ENCODE measurements at regions of chr16 and their contacts with region 1.

Region 1: DNA sequence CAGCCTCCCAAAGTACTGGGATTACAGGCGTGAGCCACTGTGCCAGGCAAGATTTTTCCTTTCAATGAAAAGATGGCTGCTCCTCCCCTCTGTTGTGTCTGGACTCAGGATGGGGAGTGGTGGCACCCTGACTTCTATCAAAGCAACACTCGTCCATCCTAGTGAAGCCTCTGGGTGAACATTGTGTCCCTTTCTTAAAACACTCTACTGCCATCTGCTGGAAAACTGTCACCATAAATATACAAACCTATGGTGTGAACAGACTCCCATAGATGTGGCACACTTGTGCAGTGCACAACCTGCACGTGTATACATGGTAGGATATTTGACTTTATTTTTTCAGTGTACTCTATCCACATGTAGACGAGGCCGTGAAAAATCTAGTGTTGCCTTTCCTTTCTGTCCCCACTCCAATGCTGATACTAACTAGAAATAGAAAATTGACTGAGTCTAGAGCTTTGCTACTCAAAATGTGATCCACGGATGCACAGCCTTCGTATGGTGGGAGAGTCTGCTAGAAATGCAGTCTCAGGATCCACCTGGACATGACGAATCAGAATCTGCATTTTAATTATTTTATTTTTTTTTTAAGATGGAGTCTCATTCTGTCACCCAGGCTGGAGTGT is 55.9 kb upstream of the PLCG2 start:
- DNase-seq: peak; percentile 92
- ATAC-seq: peak; percentile 90
- H3K4me3 ChIP-seq: no peak overlapping the region
- H3K27ac ChIP-seq: no peak overlapping the region
- H3K4me1 ChIP-seq: peaks cover 0 to 14% of the 10 kb centered on the region in 2 experiments; a peak in 2 of 4 replicates
- H3K27me3 ChIP-seq: no peaks in the 10 kb centered on the region
- CTCF ChIP-seq: peak; percentile 75 to 97 (median 91)
- POLR2A ChIP-seq: no peak
- RAD21 ChIP-seq: peak; percentile 100

Region 2: DNA sequence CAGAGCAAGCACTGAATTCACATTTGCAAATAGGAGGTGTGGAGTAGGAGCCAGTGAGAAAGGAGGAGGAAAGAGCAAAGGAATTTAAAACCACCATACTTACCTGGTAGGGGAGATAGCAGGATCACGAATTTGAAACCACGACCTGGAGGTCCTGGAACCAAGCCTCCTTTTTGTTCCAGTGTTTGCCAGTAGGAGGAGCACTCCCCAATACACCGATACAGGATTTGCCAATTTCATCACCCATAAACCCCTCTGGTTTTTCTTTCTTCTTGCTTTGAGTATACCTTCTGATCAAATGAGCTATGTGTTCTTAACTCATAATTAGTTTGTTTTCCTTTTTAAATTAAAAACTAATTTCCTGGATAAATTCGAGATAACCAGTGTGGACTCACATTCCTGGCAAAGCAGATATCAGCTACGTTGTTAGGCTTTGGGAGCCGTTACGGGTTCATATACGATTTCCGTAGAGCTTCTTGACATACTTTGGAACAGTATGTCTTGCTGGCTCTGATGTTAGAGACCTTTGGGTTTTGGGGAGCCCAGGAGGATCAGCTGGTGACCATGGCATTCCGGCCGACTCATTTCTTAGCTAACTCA is 462.1 kb before region 1 on chr16:
- CTCF ChIA-PET with region 1: no interaction called
- POLR2A ChIA-PET with region 1: no interaction called
- RAD21 ChIA-PET with region 1: no interaction called
- intact Hi-C with region 1: loop called (anchors 5 kb)
- DNase-seq: peak; percentile 29
- ATAC-seq: peak; percentile 88
- H3K4me3 ChIP-seq: no peak overlapping the region
- H3K27ac ChIP-seq: no peak overlapping the region
- H3K4me1 ChIP-seq: peaks cover 0 to 5% of the 10 kb centered on the region in 2 experiments; a peak in 1 of 4 replicates
- H3K27me3 ChIP-seq: no peaks in the 10 kb centered on the region
- CTCF ChIP-seq: peak; percentile 51 to 94 (median 93); a peak in 5 of 6 replicates
- POLR2A ChIP-seq: no peak
- RAD21 ChIP-seq: peak; percentile 56

Region 3: DNA sequence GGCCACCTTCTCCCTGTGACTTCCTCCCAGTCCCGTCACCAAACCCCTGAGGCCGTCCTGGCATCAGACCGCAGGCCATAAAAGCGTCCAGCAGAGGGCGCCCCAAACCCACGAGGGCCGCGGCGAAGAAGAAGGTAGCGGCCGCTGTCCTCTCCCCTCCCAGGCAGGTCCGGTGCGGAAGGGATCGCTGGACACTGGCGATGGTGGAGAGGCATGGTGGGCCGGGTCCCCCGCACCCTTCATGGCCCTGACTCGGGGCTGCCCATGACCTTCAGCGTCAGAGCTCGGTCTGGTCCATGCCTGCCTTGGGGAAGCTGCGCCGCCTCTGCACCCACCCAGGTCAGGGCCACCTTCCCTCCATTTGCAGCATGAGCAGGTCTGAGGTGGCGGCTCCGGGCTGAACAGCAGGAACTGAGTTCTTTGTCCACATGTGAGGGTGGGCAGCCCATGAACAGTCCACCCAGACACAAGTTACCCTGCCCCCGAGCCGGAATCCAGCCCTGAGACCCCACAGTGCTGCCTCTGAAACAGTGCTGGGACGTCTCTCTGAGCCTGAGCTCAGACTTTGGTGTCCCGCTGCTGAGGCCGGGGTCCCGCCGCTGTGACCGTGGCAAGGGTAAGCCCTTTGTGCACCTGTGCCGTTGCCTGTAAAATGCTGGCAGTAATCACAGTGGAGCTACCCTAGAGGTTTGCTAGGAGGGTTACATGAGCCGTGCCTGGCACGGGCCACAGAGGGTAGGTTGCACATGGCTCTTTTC is 319.4 kb before region 1 on chr16:
- CTCF ChIA-PET with region 1: interaction called, 4 read pairs
- POLR2A ChIA-PET with region 1: interaction called, 5 read pairs
- RAD21 ChIA-PET with region 1: no interaction called
- intact Hi-C with region 1: loop called (anchors 1 kb)
- DNase-seq: peak; percentile 85
- ATAC-seq: peak; percentile 63
- H3K4me3 ChIP-seq: peak overlapping the region; percentile 15 to 30; a peak in 3 of 4 replicates
- H3K27ac ChIP-seq: peak overlapping the region; percentile 63; the same call in 1 of the 2 replicates
- H3K4me1 ChIP-seq: peaks cover 52 to 82% of the 10 kb centered on the region in 2 experiments
- H3K27me3 ChIP-seq: no peaks in the 10 kb centered on the region
- CTCF ChIP-seq: peak in 2 of 3 experiments; percentile 97 to 100; a peak in 4 of 6 replicates
- POLR2A ChIP-seq: no peak
- RAD21 ChIP-seq: no peak

Region 4: GRCh38 chr16:81585785-81586184 is 137.4 kb before region 1 on chr16:
- CTCF ChIA-PET with region 1: interaction called, 3 read pairs
- POLR2A ChIA-PET with region 1: no interaction called
- RAD21 ChIA-PET with region 1: no interaction called
- intact Hi-C with region 1: loop called (anchors 2 kb)
- DNase-seq: peak; percentile 64
- ATAC-seq: peak; percentile 47
- H3K4me3 ChIP-seq: peak overlapping the region; percentile 13 to 41; a peak in 3 of 4 replicates
- H3K27ac ChIP-seq: peak overlapping the region; percentile 69
- H3K4me1 ChIP-seq: peaks cover 72 to 80% of the 10 kb centered on the region in 2 experiments
- H3K27me3 ChIP-seq: no peaks in the 10 kb centered on the region
- CTCF ChIP-seq: peak in 2 of 3 experiments; percentile 69 to 76; a peak in 4 of 6 replicates
- POLR2A ChIP-seq: no peak
- RAD21 ChIP-seq: no peak

Region 5: DNA sequence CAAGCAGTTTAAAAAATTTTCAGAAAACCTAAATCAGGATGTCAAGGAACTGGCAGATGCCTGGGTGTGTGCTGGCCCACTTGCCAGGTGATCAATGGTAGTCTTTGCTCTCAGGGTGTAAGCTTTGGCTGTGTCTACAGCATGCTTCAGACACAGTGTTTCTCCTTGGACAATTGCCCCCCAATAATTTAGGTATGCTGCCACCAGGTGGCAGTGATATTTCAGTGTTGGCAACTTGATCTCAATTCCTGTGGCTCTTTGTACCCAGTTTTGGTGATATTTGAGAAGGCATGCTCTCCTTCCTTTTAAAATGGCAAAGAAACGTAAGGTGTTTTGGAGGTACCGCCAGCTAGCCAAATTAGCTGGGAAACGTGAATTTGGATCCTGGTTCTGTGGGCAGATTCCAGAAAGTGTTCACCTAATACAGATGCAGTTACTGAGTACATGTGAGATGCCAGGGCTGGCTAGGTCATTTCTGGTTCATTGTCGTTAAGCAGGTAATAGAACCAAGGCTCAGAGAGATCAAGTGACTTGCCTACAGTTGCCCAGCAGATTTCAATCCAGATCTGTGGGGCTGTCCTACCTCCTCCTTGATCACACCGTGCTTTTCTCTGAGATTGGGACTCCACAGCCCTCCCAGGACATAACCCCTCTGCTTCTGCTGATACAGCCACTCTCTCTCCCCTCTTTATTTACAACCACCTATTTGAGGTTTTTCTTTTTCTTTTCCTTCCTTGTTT is 99.7 kb before region 1 on chr16:
- CTCF ChIA-PET with region 1: interaction called, 5 read pairs
- POLR2A ChIA-PET with region 1: no interaction called
- RAD21 ChIA-PET with region 1: no interaction called
- intact Hi-C with region 1: loop called (anchors 1 kb)
- DNase-seq: peak; percentile 53
- ATAC-seq: peak; percentile 70
- H3K4me3 ChIP-seq: no peak overlapping the region
- H3K27ac ChIP-seq: no peak overlapping the region
- H3K4me1 ChIP-seq: peaks cover 5 to 35% of the 10 kb centered on the region in 2 experiments; a peak in 3 of 4 replicates
- H3K27me3 ChIP-seq: no peaks in the 10 kb centered on the region
- CTCF ChIP-seq: peak; percentile 72 to 95 (median 93)
- POLR2A ChIP-seq: no peak
- RAD21 ChIP-seq: peak; percentile 99

Region 6: DNA sequence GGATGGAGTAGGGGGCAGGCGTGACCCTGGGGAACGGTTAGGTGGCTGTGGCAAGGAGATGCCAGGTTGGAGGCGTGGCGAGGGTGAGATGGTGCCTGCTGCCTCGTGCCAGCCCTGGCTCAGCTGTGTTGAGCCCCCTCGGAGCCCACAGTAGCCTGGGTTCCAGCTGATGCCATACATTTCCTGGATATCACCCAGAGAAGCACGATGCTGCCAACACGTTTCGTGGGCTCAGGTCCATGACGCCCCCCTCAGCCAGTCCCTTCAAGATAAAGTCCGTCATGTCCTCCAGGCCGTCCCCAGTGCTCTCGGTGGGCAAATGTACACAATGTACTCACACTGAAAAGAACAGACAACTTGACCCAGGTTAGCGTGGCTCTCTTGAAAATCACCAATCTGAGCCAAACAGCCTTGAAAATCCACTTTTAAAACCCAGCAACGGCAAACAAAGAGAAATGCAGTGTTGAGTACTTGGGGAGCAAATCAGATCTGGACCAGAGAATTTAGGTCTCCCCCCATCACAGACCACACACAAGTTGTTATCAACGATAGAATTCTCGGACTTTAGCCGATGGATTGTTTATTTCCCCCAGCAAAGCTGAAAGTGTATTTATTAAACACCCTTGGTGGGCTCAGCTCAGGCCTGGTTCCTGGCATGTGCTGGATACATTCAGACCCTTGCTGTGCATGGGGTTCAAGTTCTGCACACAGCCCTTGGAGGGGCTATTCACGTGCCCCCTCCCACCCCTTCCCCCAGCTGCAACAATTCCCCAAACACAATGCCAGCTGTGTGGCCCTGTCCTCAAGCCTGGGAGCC is 46.9 kb before region 1 on chr16:
- CTCF ChIA-PET with region 1: no interaction called
- POLR2A ChIA-PET with region 1: no interaction called
- RAD21 ChIA-PET with region 1: no interaction called
- intact Hi-C with region 1: no loop called
- DNase-seq: no peak
- ATAC-seq: no peak
- H3K4me3 ChIP-seq: no peak overlapping the region
- H3K27ac ChIP-seq: no peak overlapping the region
- H3K4me1 ChIP-seq: no peaks in the 10 kb centered on the region
- H3K27me3 ChIP-seq: no peaks in the 10 kb centered on the region
- CTCF ChIP-seq: no peak
- POLR2A ChIP-seq: no peak
- RAD21 ChIP-seq: no peak

Measured in HCT116 (cell line).